Aorta (tissue), 5 donors: ENCODE measurements at regions of chr11 and their contacts with region 1.

Region 1: DNA sequence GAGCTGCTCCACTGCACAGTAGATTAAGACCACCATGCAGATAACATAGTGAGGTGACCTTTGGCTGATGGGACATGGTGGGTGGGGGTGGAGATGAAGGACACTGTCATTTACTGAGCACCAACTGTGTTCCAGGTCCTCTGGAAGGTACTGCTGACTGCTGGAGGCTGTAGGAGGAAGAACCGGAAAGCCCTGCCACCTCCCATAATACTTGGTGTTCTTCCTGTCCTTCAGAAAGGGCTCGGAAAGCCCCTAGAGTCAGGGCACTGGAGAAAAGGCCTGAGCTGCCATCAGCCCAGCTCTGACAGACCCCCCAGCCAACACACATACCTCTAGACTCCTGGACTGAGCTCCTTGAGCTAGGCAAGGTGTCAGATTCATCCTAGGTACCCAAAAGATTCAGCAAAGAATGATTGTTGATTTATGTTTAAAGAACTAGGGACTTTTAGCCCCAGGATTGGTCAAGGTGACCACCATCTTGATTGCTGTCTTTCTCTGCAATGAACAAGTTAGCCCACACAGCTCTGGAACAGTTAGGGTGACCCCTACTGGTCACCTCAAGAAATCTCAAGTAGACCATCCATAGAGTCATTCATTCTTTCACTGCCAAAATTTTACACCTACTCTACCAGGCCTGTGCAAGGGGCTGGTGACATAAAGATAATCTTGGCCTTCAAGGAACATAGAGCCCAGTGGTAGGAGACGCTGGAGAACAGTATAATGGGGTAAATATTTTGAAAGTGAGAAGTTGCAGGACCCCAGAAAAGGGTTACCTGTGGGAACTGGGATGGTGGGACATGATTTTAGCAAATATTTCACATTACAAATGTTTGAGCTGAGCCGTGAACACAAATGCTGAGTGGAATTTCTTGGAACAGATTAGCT is 39.4 kb downstream of the IRAG1 start:
- DNase-seq: no peak
- ATAC-seq: peak; percentile 45
- H3K4me3 ChIP-seq: no peak overlapping the region
- H3K27ac ChIP-seq: peak overlapping the region; percentile 29 to 93
- H3K4me1 ChIP-seq: peaks cover 5 to 8% of the 10 kb centered on the region in 2 donors
- H3K27me3 ChIP-seq: no peaks in the 10 kb centered on the region

Region 2: DNA sequence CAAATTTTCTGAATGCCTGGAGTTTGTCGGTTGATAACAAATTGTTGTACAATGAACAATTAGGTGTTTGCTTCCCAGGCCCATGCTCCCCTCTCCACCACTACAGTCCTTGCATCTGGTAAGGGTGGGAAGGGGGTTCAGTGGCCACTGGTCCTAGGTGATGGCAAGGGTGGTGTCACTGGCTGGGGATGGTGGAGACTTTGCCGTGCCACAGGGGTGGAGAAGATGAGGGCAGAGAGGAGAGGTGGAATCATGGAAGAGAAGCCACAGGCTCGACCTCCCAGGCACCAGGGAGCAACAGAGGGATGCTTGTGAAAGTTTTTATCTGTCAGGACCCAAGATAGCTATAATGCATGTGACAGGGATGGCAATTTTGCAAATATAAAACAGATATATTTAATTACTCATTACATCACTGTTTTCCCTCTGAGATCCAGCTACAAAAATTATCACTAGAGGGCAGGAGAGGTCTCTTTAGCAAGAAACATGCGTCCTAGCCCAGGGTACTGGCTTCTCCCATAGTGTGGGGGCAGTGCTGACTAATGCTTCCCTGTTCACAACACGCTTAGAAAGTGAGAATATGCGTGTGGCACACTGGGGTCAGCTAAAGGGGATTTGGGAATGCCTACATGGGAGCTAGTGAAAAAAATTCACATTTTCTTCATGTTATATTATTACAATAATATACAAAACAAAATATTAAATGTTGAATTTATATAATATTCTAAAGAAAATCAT is 248.1 kb before region 1 on chr11:
- intact Hi-C with region 1: loop called in 1 of 2 experiments (anchors 10 kb)
- DNase-seq: peak; percentile 81
- ATAC-seq: peak; percentile 87
- H3K4me3 ChIP-seq: no peak overlapping the region
- H3K27ac ChIP-seq: no peak overlapping the region
- H3K4me1 ChIP-seq: no peaks in the 10 kb centered on the region
- H3K27me3 ChIP-seq: no peaks in the 10 kb centered on the region

Region 3: GRCh38 chr11:10499452-10499851 is 154.7 kb before region 1 on chr11:
- intact Hi-C with region 1: no loop called
- DNase-seq: no peak
- ATAC-seq: no peak
- H3K4me3 ChIP-seq: no peak overlapping the region
- H3K27ac ChIP-seq: no peak overlapping the region
- H3K4me1 ChIP-seq: no peaks in the 10 kb centered on the region
- H3K27me3 ChIP-seq: no peaks in the 10 kb centered on the region

Region 4: GRCh38 chr11:10693509-10694081 is 39.4 kb after region 1 on chr11 and contains the start of gene IRAG1:
- intact Hi-C with region 1: loop called (anchors 5 kb)
- DNase-seq: peak; percentile 87 to 92
- ATAC-seq: peak; percentile 82
- H3K4me3 ChIP-seq: peak within 1 kb of the TSS; percentile 87 to 98
- H3K27ac ChIP-seq: peak within 1 kb of the TSS; percentile 92 to 99
- H3K4me1 ChIP-seq: peaks cover 0 to 8% of the 10 kb centered on the region in 2 donors
- H3K27me3 ChIP-seq: no peaks in the 10 kb centered on the region
- total RNA-seq, gene IRAG1: 189 to 518 TPM